Dorsolateral prefrontal cortex (tissue), 120 donors: ENCODE measurements at regions of chr12 and their contacts with region 1.

Region 1: GRCh38 chr12:68856510-68856909 is 48.5 kb downstream of the MDM2 start:
- DNase-seq: no peak
- H3K4me3 ChIP-seq: no peak overlapping the region
- H3K27ac ChIP-seq: peak overlapping the region in 36 of 59 donors; percentile 1 to 75 (median 32)
- H3K27me3 ChIP-seq: no peaks in the 10 kb centered on the region
- CTCF ChIP-seq: no peak

Region 2: GRCh38 chr12:68821357-68822188 is 34.9 kb before region 1 on chr12:
- intact Hi-C with region 1: no loop called
- DNase-seq: no peak
- H3K4me3 ChIP-seq: no peak overlapping the region
- H3K27ac ChIP-seq: peak overlapping the region in 5 of 59 donors; percentile 8 to 17 (median 16)
- H3K27me3 ChIP-seq: no peaks in the 10 kb centered on the region
- CTCF ChIP-seq: no peak

Region 3: DNA sequence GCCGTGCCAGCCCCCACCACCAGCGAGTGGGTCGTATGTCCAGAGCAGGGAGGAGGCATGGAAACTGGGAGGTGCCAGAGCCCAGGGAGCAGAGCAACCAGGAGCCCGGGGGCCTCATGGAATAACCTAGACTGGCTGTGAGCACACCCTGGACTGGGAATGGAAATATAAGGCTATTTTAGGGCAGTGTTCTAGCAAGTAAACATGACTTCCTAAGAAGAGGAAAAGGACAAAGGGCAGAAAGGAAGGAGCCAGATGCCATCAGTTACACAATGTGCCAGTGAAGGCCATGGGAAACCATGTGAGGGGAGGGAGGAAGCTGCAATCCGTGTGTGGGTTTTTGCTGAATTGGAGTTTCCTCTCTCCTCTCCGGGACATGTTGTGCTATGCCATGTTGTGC is 95.1 kb after region 1 on chr12:
- intact Hi-C with region 1: no loop called
- DNase-seq: no peak
- H3K4me3 ChIP-seq: no peak overlapping the region
- H3K27ac ChIP-seq: peak overlapping the region in 6 of 59 donors; percentile 3 to 56 (median 35)
- H3K27me3 ChIP-seq: no peaks in the 10 kb centered on the region
- CTCF ChIP-seq: no peak

Region 4: GRCh38 chr12:69239352-69239921 is 382.9 kb after region 1 on chr12 and contains the start of gene CPSF6:
- intact Hi-C with region 1: loop called in 1 of 2 experiments (anchors 10 kb)
- DNase-seq: peak; percentile 89 to 98 (median 95)
- H3K4me3 ChIP-seq: peak within 1 kb of the TSS; percentile 43 to 95 (median 84)
- H3K27ac ChIP-seq: peak within 1 kb of the TSS; percentile 72 to 98 (median 92)
- H3K27me3 ChIP-seq: no peaks in the 10 kb centered on the region
- CTCF ChIP-seq: peak in 41 of 56 donors; percentile 8 to 61 (median 34)
- total RNA-seq, gene CPSF6: 76.6 to 122 (median 94.4) TPM